Kidney (tissue), 22 donors: ENCODE measurements at regions of chr1 and their contacts with region 1.

Region 1: GRCh38 chr1:155167166-155168104 is 5.7 kb downstream of the KRTCAP2 start:
- DNase-seq: peak; percentile 89 to 95 (median 93)
- H3K4me3 ChIP-seq: no peak overlapping the region
- H3K27ac ChIP-seq: peak overlapping the region; percentile 2 to 47
- H3K4me1 ChIP-seq: peaks cover 0 to 14% (median 7%) of the 10 kb centered on the region in 3 donors
- H3K27me3 ChIP-seq: no peaks in the 10 kb centered on the region
- CTCF ChIP-seq: peak; percentile 92

Region 2: DNA sequence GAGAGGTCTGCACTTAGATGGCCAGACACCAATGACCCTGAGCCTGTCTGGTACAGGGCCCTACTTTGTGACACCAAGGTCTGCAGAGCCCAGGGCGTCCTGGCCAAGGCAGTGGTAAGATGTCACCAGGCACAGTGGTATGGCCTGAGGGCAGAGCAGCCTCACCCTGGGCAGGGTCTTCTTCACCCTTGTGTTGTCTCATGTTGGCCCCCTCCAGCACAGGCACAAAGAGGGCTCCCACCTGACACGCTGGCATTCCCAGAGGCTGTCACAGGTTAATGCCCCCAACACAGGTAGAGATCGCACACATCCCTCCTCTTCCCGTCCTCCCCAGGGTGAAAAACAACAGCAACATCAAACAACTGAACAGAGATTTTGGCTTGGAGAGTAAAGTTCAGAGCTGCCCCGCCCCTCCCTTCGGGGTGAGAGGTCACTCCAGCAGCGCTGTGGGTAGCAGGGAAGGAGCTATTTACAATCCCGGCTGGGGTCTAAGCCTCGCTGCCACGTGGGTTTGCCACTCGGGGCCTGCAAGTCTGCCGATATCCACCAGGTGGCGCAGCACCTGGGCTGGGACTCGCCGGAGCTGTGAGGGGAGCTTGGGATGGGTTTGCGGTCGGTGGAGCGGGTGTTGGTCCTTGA is 76.2 kb before region 1 on chr1:
- intact Hi-C with region 1: loop called (anchors 5 kb)
- DNase-seq: peak; percentile 81 to 91 (median 88)
- H3K4me3 ChIP-seq: no peak overlapping the region
- H3K27ac ChIP-seq: no peak overlapping the region
- H3K4me1 ChIP-seq: peaks cover 0 to 5% (median 0%) of the 10 kb centered on the region in 3 donors
- H3K27me3 ChIP-seq: no peaks in the 10 kb centered on the region
- CTCF ChIP-seq: peak; percentile 98

Region 3: GRCh38 chr1:155352631-155353030 is 185.2 kb after region 1 on chr1:
- intact Hi-C with region 1: no loop called
- DNase-seq: no peak
- H3K4me3 ChIP-seq: no peak overlapping the region
- H3K27ac ChIP-seq: no peak overlapping the region
- H3K4me1 ChIP-seq: no peaks in the 10 kb centered on the region
- H3K27me3 ChIP-seq: no peaks in the 10 kb centered on the region
- CTCF ChIP-seq: no peak

Region 4: DNA sequence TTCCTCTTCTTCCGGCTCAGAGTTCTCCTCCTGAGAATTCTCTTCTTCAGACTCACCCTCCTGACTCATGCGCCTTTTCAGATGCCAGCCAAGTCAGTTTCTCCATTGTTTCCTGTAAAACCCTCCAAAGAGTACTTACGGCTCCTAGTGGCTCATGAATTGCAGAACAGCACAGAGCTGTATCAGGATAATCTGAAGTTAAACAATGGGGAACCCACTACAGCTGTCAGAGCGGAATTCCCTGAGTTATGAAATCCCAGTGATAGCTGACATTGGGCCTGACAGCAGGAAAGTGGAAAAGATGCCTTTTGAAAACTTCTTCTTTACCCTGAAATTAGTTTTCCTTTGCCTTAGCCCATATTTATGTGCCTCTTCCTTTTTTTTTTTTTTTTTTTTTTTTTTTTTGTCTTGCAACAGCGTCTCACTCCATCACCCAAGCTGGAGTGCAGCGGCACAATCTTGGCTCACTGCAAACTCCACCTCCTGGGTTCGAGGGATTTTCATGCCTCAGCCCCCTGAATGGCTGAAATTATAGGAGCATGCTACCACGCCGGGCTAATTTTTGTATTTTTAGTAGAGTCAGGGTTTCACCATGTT is 481.2 kb after region 1 on chr1:
- intact Hi-C with region 1: no loop called
- DNase-seq: peak in 2 of 5 donors; percentile 25 to 58
- H3K4me3 ChIP-seq: no peak overlapping the region
- H3K27ac ChIP-seq: no peak overlapping the region
- H3K4me1 ChIP-seq: no peaks in the 10 kb centered on the region
- H3K27me3 ChIP-seq: no peaks in the 10 kb centered on the region
- CTCF ChIP-seq: peak; percentile 54